Naive thymus-derived CD4-positive, alpha-beta T cell (primary cell): ENCODE measurements at regions of chr1 and their contacts with region 1.

Region 1: GRCh38 chr1:203702130-203702577 is 62.8 kb upstream of the LAX1 start:
- DNase-seq: peak; percentile 21 to 73 (median 54)
- ATAC-seq: peak; percentile 77
- H3K4me3 ChIP-seq: no peak overlapping the region
- H3K4me3 Mint-ChIP-seq: no peak overlapping the region
- H3K27ac ChIP-seq: no peak overlapping the region
- H3K27ac Mint-ChIP-seq: peak overlapping the region; percentile 58 to 92 (median 76)
- H3K4me1 ChIP-seq: no peaks in the 10 kb centered on the region
- H3K4me1 Mint-ChIP-seq: peaks cover 3 to 25% (median 12%) of the 10 kb centered on the region in 7 donors
- H3K27me3 ChIP-seq: no peaks in the 10 kb centered on the region
- H3K27me3 Mint-ChIP-seq: no peaks in the 10 kb centered on the region

Region 2: DNA sequence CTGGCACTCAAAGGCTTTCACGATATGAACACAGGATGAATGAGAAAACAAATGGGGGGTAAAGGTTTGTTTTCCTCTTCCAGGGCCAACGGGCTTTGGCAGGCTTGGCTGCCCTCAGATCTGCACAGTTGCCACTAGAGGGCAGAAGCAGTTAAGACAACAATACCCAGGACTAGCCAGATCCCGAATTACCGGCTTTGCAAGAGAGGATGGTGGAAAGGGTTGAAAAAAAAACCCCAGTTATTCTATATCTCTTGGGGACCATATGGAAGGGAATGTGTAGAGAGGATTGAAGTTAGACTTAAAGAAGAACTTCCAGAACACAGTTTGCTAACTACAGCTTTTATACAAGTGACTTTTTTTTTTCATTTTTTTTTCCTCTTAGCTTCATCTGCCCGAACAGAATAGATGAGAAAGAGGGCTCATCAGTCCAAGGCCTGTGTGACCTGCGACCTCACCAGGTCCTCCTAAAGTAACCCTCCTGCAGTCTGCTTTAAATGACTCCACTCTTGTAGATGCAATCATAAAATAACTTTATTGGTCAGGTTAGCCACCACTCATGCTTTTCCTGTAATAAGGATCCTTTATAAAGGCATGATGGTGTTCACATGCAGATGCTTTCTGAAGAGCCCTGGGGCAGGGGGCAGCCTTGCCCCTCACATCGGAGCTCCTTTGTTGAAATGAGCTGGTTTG is 361.9 kb before region 1 on chr1:
- CTCF ChIA-PET with region 1: interaction called, 30 read pairs
- POLR2A ChIA-PET with region 1: no interaction called
- intact Hi-C with region 1: loop called (anchors 1 to 5 kb)
- DNase-seq: peak in 7 of 9 donors; percentile 39 to 68 (median 62)
- ATAC-seq: peak; percentile 80
- H3K4me3 ChIP-seq: no peak overlapping the region
- H3K4me3 Mint-ChIP-seq: no peak overlapping the region
- H3K27ac ChIP-seq: no peak overlapping the region
- H3K27ac Mint-ChIP-seq: peak overlapping the region in 7 of 9 donors; percentile 1 to 75 (median 34)
- H3K4me1 ChIP-seq: peaks cover 9 to 18% of the 10 kb centered on the region in 2 donors
- H3K4me1 Mint-ChIP-seq: peaks cover 24 to 40% (median 34%) of the 10 kb centered on the region in 7 donors
- H3K27me3 ChIP-seq: no peaks in the 10 kb centered on the region
- H3K27me3 Mint-ChIP-seq: peaks cover 0 to 50% (median 6%) of the 10 kb centered on the region in 5 donors

Region 3: GRCh38 chr1:203593723-203594122 is 108.4 kb before region 1 on chr1:
- CTCF ChIA-PET with region 1: interaction called, 25 read pairs
- POLR2A ChIA-PET with region 1: no interaction called
- intact Hi-C with region 1: loop called (anchors 1 kb)
- DNase-seq: peak in 7 of 9 donors; percentile 17 to 42 (median 25)
- ATAC-seq: peak; percentile 79
- H3K4me3 ChIP-seq: no peak overlapping the region
- H3K4me3 Mint-ChIP-seq: no peak overlapping the region
- H3K27ac ChIP-seq: no peak overlapping the region
- H3K27ac Mint-ChIP-seq: peak overlapping the region in 4 of 9 donors; percentile 20 to 70 (median 50)
- H3K4me1 ChIP-seq: no peaks in the 10 kb centered on the region
- H3K4me1 Mint-ChIP-seq: peaks cover 0 to 32% (median 7%) of the 10 kb centered on the region in 7 donors
- H3K27me3 ChIP-seq: no peaks in the 10 kb centered on the region
- H3K27me3 Mint-ChIP-seq: peaks cover 0 to 4% (median 0%) of the 10 kb centered on the region in 5 donors

Region 4: DNA sequence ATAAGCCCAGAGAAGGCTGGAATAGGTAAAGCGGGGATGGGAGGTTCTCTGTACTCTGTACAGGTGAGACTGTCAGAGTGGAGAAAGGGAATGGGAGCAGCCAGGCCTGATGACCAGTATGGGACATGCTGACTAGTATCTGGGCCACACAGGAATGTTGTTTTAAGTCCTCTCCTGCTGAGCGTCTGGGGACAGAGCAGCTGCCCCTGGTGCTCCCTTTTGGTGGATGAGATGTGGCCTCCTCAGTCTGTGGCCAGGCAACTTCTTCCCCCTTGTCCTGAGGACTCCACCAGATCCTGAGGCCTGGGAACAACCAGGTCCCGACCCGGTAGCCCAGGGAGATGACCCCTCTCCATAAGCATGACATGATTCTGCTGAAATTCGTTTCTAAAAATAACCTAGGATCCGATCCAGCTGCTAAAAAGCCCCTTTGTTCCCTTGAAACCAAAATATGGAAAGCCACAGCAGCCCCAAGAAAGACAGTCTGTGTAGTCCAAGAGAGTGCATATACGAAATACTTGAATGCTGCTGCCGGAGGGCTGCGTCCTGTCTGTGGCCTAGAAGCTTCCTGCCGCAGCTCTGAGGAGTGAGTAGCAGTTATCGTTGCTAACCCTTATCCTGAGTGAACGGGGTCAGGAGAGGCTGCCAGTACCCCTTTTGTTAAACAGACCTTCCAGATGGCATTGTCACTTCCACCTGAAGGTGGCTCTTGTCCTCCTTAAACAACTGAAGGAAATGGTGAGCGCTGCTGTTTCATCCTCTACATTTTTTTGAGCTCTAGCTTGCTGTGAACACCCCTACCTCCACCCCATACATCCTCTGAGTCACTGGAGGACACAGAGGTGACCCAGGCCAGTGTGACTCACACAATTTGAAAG is 28.4 kb before region 1 on chr1:
- CTCF ChIA-PET with region 1: interaction called, 39 read pairs
- POLR2A ChIA-PET with region 1: interaction called, 4 read pairs
- intact Hi-C with region 1: loop called (anchors 1 kb)
- DNase-seq: peak; percentile 27 to 79 (median 73)
- ATAC-seq: peak; percentile 91
- H3K4me3 ChIP-seq: no peak overlapping the region
- H3K4me3 Mint-ChIP-seq: peak overlapping the region; percentile 57 to 87 (median 77)
- H3K27ac ChIP-seq: peak overlapping the region; percentile 53
- H3K27ac Mint-ChIP-seq: peak overlapping the region; percentile 87 to 99 (median 95)
- H3K4me1 ChIP-seq: peaks cover 52 to 54% of the 10 kb centered on the region in 2 donors
- H3K4me1 Mint-ChIP-seq: peaks cover 50 to 81% (median 71%) of the 10 kb centered on the region in 7 donors
- H3K27me3 ChIP-seq: no peaks in the 10 kb centered on the region
- H3K27me3 Mint-ChIP-seq: no peaks in the 10 kb centered on the region

Region 5: DNA sequence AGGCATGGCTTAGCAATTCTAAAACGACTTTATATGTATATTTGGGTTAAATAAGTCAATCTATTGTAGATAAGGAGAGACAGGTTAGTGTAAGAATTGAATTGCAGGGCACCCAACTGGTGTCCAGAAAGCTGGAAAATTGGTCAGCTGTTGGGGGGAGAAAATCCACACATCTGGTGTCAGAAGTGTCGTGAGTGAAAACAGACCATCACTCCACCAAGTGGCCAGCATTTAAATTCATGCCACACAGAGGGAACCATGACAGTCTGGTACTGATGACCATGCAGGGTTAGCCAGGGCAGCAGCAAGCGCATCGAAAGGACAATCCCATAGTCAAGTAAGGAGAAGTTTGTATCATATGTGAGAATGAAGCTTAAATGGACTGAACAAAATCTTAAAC is 74.5 kb after region 1 on chr1:
- CTCF ChIA-PET with region 1: interaction called, 3 read pairs
- POLR2A ChIA-PET with region 1: no interaction called
- intact Hi-C with region 1: loop called in 1 of 2 experiments (anchors 2 kb)
- DNase-seq: no peak
- ATAC-seq: peak; percentile 40
- H3K4me3 ChIP-seq: no peak overlapping the region
- H3K4me3 Mint-ChIP-seq: peak overlapping the region in 1 of 10 donors; percentile 31
- H3K27ac ChIP-seq: no peak overlapping the region
- H3K27ac Mint-ChIP-seq: peak overlapping the region in 8 of 9 donors; percentile 22 to 85 (median 50)
- H3K4me1 ChIP-seq: no peaks in the 10 kb centered on the region
- H3K4me1 Mint-ChIP-seq: peaks cover 0 to 16% (median 7%) of the 10 kb centered on the region in 7 donors
- H3K27me3 ChIP-seq: no peaks in the 10 kb centered on the region
- H3K27me3 Mint-ChIP-seq: no peaks in the 10 kb centered on the region